Endothelial cell of umbilical vein (primary cell): ENCODE measurements at regions of chr9 and their contacts with region 1.

Region 1: GRCh38 chr9:85741875-85742629 is at the start of gene AGTPBP1:
- DNase-seq: peak; percentile 90
- H3K4me3 ChIP-seq: peak within 1 kb of the TSS; percentile 93 to 98 (median 95)
- H3K27ac ChIP-seq: peak within 1 kb of the TSS; percentile 43
- H3K4me1 ChIP-seq: peaks cover 15% of the 10 kb centered on the region
- H3K27me3 ChIP-seq: peaks cover 11 to 17% of the 10 kb centered on the region in 2 experiments
- CTCF ChIP-seq: no peak
- POLR2A ChIP-seq: no peak
- total RNA-seq, gene AGTPBP1: 18.4 and 19.1 TPM in 2 replicates

Region 2: DNA sequence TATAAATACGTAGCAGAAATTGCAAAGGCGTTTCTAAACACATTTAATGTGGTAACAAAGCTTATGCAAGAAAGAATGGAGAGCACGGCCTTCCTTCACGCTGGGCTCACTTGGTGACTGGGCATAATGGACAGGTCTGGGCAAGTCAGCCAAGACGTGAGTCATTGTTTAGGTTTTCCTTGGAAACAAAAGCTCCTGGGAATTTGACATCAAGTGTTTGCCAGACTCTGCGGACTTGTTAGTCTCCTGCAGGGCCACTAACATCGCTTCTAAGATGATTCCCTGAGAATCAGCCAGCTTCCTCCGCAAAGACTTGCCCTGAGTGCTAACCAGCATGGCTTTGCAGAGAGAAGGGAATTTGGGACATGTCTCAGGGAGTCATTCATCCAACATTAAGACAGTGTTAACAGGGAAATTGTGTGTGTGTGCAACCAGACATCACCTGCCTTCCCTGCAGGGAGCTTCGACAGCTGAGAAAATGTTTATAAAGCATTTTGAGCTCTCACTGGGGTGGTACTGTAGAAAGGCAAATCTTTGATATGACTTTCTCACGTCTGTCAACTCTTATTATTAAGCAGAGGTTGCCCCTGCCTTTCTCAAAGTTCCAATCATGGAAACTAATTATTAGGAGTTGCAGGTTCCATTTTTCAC is 890.0 kb before region 1 on chr9:
- CTCF ChIA-PET with region 1: no interaction called
- POLR2A ChIA-PET with region 1: no interaction called
- dilution Hi-C with region 1: no loop called
- intact Hi-C with region 1: loop called (anchors 5 kb)
- DNase-seq: peak; percentile 96
- H3K4me3 ChIP-seq: no peak overlapping the region
- H3K27ac ChIP-seq: peak overlapping the region; percentile 60
- H3K4me1 ChIP-seq: peaks cover 20% of the 10 kb centered on the region
- H3K27me3 ChIP-seq: no peaks in the 10 kb centered on the region
- CTCF ChIP-seq: no peak
- POLR2A ChIP-seq: peak; percentile 19

Region 3: DNA sequence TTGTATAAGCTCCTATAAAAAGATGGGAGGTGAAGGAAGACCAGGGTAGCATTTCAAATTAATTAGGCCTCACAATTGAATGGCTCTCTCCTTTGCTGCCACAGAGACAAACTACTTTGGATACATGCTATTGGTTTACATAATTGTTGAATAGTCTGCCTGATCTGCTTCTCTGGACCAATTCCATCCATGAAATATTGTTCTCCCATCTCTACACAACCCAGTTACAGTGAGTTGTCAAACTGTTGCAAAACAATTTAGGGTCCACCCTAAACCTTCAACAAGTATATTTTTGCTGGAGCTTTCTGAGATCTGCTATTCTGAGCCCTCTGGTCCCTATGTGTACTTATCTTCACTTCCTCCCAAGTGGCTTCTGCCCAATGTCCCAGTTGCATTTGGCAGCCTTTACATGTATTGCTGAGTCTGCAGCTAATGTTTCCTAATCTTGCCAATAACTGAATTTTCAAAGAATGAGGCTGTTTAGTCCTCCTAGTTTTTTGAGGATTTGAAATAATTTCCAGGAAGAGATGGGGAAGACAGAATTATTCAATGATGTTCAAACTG is 39.2 kb before region 1 on chr9:
- CTCF ChIA-PET with region 1: interaction called, 11 read pairs
- POLR2A ChIA-PET with region 1: no interaction called
- dilution Hi-C with region 1: no loop called
- intact Hi-C with region 1: loop called (anchors 1 kb)
- DNase-seq: no peak
- H3K4me3 ChIP-seq: no peak overlapping the region
- H3K27ac ChIP-seq: no peak overlapping the region
- H3K4me1 ChIP-seq: no peaks in the 10 kb centered on the region
- H3K27me3 ChIP-seq: no peaks in the 10 kb centered on the region
- CTCF ChIP-seq: no peak
- POLR2A ChIP-seq: no peak

Region 4: GRCh38 chr9:85940832-85941621 is 199.0 kb after region 1 on chr9 and contains the start of gene NAA35:
- CTCF ChIA-PET with region 1: no interaction called
- POLR2A ChIA-PET with region 1: no interaction called
- dilution Hi-C with region 1: no loop called
- intact Hi-C with region 1: loop called (anchors 1 kb)
- DNase-seq: peak; percentile 99
- H3K4me3 ChIP-seq: peak within 1 kb of the TSS; percentile 68 to 94 (median 91)
- H3K27ac ChIP-seq: peak within 1 kb of the TSS; percentile 83
- H3K4me1 ChIP-seq: peaks cover 13% of the 10 kb centered on the region
- H3K27me3 ChIP-seq: no peaks in the 10 kb centered on the region
- CTCF ChIP-seq: no peak
- POLR2A ChIP-seq: no peak
- total RNA-seq, gene NAA35: 22.5 and 23.3 TPM in 2 replicates

Region 5: DNA sequence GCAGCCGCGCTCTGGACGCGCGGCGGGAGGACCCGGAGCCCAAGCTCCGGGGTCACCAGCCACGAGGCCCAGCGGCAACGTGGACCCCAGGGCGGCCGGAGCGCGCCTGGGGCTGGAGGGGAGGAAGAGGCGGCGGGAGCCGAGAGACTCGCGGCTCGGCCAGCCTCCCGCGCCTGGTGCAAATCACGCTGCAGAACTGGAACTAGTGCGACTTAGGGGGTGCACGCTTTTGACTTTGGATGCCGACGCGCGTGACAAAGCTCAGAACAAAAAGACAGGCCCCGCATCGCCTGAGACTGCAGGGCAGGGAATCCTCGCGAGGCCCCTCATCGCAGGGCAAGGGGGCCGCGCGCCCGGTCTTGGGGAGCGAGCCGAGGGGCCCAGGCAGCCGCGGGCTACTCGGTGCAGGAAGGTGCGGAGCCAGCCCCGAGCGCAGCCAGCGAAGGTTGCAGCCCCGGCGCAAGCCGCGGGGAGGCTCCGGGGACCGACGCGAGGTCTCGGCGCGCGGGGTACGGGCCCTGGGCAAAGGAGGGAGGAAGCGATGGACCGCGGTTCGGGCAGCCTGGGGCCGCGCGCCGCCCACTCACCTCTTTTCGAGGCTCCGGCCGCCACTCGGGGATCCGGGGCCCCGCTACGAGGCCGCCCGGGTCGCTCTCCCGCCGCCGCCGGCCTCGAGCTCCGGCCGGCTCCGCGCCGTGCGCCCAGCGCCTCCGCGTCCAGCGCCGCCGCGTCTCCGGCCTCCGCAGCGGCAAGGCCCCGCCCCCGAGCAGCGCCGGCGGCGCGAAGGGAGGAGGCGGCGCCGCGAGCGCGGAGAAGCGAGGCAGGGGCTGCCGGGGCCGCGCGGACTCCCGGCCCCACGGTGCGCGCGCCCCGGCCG is 357.0 kb after region 1 on chr9 and contains the start of gene GOLM1:
- CTCF ChIA-PET with region 1: no interaction called
- POLR2A ChIA-PET with region 1: no interaction called
- dilution Hi-C with region 1: no loop called
- intact Hi-C with region 1: loop called (anchors 5 kb)
- DNase-seq: peak; percentile 58
- H3K4me3 ChIP-seq: peak within 1 kb of the TSS; percentile 63 to 88 (median 69)
- H3K27ac ChIP-seq: peak within 1 kb of the TSS; percentile 65
- H3K4me1 ChIP-seq: peaks cover 20% of the 10 kb centered on the region
- H3K27me3 ChIP-seq: no peaks in the 10 kb centered on the region
- CTCF ChIP-seq: peak in 1 of 2 donors; percentile 26
- POLR2A ChIP-seq: peak; percentile 43
- total RNA-seq, gene GOLM1: 94.9 and 108 TPM in 2 replicates

Region 6: GRCh38 chr9:86948074-86948929 is 1206.2 kb after region 1 on chr9:
- CTCF ChIA-PET with region 1: no interaction called
- POLR2A ChIA-PET with region 1: no interaction called
- dilution Hi-C with region 1: no loop called
- intact Hi-C with region 1: loop called (anchors 10 kb)
- DNase-seq: peak; percentile 61
- H3K4me3 ChIP-seq: peak overlapping the region in 2 of 3 experiments; percentile 30 to 69
- H3K27ac ChIP-seq: no peak overlapping the region
- H3K4me1 ChIP-seq: peaks cover 3% of the 10 kb centered on the region
- H3K27me3 ChIP-seq: peaks cover 12 to 20% of the 10 kb centered on the region in 2 experiments
- CTCF ChIP-seq: peak; percentile 58 to 84
- POLR2A ChIP-seq: no peak